ENCODE measurements at regions of chr4 and their contacts with region 1.

Region 1: GRCh38 chr4:18021722-18022571 is at the start of gene LCORL:
- DNase-seq: peak; percentile 99
- H3K4me3 ChIP-seq: peak within 1 kb of the TSS; percentile 71 to 97 (median 90)
- H3K27ac ChIP-seq: peak within 1 kb of the TSS; percentile 71 to 96 (median 94)
- H3K4me1 ChIP-seq: peaks cover 0 to 46% (median 23%) of the 10 kb centered on the region in 6 donors
- H3K27me3 ChIP-seq: no peaks in the 10 kb centered on the region
- CTCF ChIP-seq: peak in 8 of 11 experiments; percentile 18 to 44 (median 37)
- POLR2A ChIP-seq: no peak
- total RNA-seq, gene LCORL: 19.3 to 48.7 (median 25.7) TPM

Region 2: GRCh38 chr4:17810260-17811077 is 211.5 kb before region 1 on chr4 and contains the starts of genes DCAF16 and NCAPG:
- intact Hi-C with region 1: loop called (anchors 10 kb)
- DNase-seq: peak; percentile 100
- H3K4me3 ChIP-seq: peak within 1 kb of the TSS; percentile 65 to 94 (median 78)
- H3K27ac ChIP-seq: peak within 1 kb of the TSS; percentile 93 to 98 (median 95)
- H3K4me1 ChIP-seq: peaks cover 30 to 73% (median 51%) of the 10 kb centered on the region in 6 donors
- H3K27me3 ChIP-seq: no peaks in the 10 kb centered on the region
- CTCF ChIP-seq: peak in 3 of 11 experiments; percentile 52 to 62 (median 53)
- POLR2A ChIP-seq: peak; percentile 44 to 92 (median 77)
- total RNA-seq, gene DCAF16: 22.0 to 41.7 (median 29.0) TPM
- total RNA-seq, gene NCAPG: 1.2 to 10.2 (median 5.2) TPM

Measured in spleen (tissue), 13 donors.